HepG2 (cell line): ENCODE measurements at regions of chr11 and their contacts with region 1.

Region 1: GRCh38 chr11:68146704-68147474 is 25.7 kb upstream of the CHKA start:
- DNase-seq: peak; percentile 97
- ATAC-seq: peak; percentile 89
- H3K4me3 ChIP-seq: peak overlapping the region; percentile 43 to 76 (median 44)
- H3K27ac ChIP-seq: peak overlapping the region; percentile 98
- H3K4me1 ChIP-seq: peaks cover 84% of the 10 kb centered on the region
- H3K27me3 ChIP-seq: no peaks in the 10 kb centered on the region; a peak in 1 of 5 replicates
- CTCF ChIP-seq: peak; percentile 35; the same call in 1 of the 2 replicates
- EP300 ChIP-seq: peak in 1 of 2 experiments; percentile 92
- POLR2A ChIP-seq: peak; percentile 94 to 97
- RAD21 ChIP-seq: peak; percentile 73; the same call in 1 of the 2 replicates

Region 2: DNA sequence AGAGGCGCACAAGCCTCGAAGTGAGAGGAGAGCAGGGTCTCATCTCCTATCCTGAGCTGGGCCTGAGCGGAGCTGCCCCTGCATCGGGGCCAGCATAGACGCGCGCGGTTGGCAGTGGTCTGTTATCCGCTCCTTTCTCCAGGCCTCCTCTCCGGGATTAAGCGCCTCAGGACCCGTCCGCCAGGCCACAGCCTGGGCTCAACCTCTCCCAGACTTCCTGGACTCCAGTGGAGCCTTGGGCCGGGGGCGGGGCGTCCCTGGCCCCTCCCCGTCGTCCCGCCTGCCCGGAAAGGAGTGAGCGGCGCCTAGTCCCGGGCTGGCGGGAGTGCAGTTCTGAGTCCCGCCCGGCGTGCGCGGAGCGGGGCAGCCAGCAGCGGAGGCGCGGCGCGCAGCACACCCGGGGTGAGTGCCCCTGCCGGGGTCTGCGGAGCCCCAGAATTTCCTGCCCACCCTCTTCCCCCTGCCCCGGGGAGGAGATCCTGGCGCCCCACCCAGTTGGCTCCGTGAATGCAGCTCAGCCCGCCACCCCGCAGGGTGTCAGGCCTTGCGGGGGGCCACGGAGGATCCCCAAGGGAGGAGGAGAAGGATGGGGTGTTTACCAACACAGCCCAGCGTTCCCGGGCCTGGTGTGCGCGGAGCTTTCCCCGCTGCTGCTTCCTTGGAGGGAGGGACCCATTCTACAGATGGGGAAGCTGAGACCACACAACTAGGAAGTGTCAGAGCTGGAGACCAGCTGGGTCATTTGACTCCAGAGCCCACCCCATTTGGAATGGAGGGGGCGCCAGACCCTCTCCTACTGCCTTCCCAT is 108.0 kb before region 1 on chr11 and contains the start of gene TCIRG1:
- CTCF ChIA-PET with region 1: no interaction called
- POLR2A ChIA-PET with region 1: interaction called, 17 read pairs
- in situ Hi-C with region 1: no loop called
- intact Hi-C with region 1: no loop called
- DNase-seq: peak; percentile 79
- ATAC-seq: peak; percentile 66
- H3K4me3 ChIP-seq: peak within 1 kb of the TSS; percentile 76 to 84 (median 78)
- H3K27ac ChIP-seq: peak within 1 kb of the TSS; percentile 95
- H3K4me1 ChIP-seq: peaks cover 30% of the 10 kb centered on the region
- H3K27me3 ChIP-seq: no peaks in the 10 kb centered on the region
- CTCF ChIP-seq: no peak
- EP300 ChIP-seq: no peak
- POLR2A ChIP-seq: peak in 1 of 2 experiments; percentile 74; a peak in 2 of 4 replicates
- RAD21 ChIP-seq: peak; percentile 14; the same call in 1 of the 2 replicates
- total RNA-seq, gene TCIRG1: 9.9 and 48.0 TPM in 2 replicates

Region 3: DNA sequence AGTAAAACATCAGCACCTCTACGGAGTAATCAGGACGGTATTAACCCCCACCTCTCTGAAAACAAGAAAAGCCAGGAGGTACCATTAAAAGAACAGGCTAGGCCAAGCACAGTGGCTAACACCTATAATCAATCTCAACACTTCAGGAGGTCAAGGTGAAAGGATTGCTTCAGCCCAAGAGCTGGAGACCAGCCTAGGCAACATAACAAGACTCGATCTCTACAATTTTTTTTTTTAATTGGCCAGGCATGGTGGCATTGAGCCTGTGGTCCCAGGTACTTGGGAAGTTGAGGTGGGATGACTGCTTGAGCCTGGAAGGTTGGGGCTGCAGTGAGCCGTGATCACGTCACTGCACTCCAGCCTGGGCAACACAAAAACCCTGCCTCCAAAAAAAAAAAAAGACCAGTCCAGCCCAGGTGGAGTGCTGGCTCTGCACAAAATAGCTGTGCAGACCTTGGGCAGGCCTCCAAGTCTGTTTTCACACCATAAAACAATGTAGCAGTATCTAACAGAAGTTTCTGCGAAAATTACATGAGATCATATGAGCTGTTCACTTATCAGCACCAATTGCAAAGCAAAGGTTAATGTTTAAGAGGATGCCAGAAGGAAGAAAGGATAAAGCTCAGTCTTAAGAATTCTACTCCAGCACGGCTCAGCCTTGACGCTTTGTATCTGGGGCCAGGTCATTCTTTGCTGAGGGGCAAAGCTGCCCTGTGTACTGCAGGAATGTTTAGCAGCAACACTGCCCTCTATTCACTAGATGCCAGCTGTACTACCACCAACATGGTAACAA is 40.5 kb before region 1 on chr11:
- CTCF ChIA-PET with region 1: no interaction called
- POLR2A ChIA-PET with region 1: interaction called, 10 read pairs
- in situ Hi-C with region 1: no loop called
- intact Hi-C with region 1: no loop called
- DNase-seq: peak; percentile 61
- ATAC-seq: peak; percentile 67
- H3K4me3 ChIP-seq: peak overlapping the region in 1 of 3 experiments; percentile 14; a peak in 2 of 6 replicates
- H3K27ac ChIP-seq: peak overlapping the region; percentile 79
- H3K4me1 ChIP-seq: peaks cover 99% of the 10 kb centered on the region
- H3K27me3 ChIP-seq: no peaks in the 10 kb centered on the region
- CTCF ChIP-seq: 0 out of 2 replicates have a peak, but pooled peaks have one; percentile 4
- EP300 ChIP-seq: no peak; a peak in 1 of 4 replicates
- POLR2A ChIP-seq: no peak
- RAD21 ChIP-seq: no peak

Region 4: GRCh38 chr11:68127714-68128681 is 18.9 kb before region 1 on chr11:
- CTCF ChIA-PET with region 1: no interaction called
- POLR2A ChIA-PET with region 1: interaction called, 196 read pairs
- in situ Hi-C with region 1: no loop called
- intact Hi-C with region 1: loop called (anchors 2 kb)
- DNase-seq: peak; percentile 90
- ATAC-seq: peak; percentile 84
- H3K4me3 ChIP-seq: peak overlapping the region; percentile 59 to 78 (median 62)
- H3K27ac ChIP-seq: peak overlapping the region; percentile 99
- H3K4me1 ChIP-seq: peaks cover 67% of the 10 kb centered on the region
- H3K27me3 ChIP-seq: no peaks in the 10 kb centered on the region
- CTCF ChIP-seq: peak; percentile 37; the same call in 1 of the 2 replicates
- EP300 ChIP-seq: peak in 1 of 2 experiments; percentile 74; a peak in 3 of 4 replicates
- POLR2A ChIP-seq: no peak
- RAD21 ChIP-seq: peak; percentile 46

Region 5: DNA sequence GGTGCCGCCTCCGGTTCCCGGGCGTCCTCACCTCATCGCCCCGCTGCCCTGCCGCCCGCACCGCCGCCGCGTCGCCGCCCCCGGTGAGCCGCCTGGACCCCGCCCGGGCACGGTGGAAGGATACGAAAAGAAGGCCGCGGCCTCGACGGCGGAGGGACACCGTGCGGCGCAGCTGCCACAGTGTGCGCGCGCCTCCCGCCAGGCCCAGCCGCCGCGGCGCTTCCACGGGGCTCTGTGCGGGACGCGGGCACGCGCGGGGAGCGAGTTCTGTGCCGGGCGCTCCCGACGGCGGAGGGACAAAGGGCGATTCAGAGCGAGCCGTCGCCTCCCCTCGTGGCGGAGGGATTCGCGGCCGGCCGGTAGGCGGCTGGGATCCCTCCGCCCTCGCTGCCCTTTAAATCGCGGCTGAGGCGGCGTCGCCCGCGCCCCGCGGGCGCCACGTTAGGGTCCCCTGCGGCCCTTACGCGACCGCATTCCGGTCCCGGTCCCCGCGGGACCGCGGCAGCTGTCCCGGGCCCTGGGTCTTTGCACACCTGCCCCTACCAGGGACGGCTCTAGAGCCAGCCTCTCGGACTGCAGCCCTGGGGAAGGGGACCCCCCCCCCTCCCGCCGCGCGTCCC is 66.8 kb after region 1 on chr11:
- CTCF ChIA-PET with region 1: no interaction called
- POLR2A ChIA-PET with region 1: interaction called, 21 read pairs
- in situ Hi-C with region 1: no loop called
- intact Hi-C with region 1: no loop called
- DNase-seq: peak; percentile 76
- ATAC-seq: peak; percentile 16
- H3K4me3 ChIP-seq: peak overlapping the region; percentile 63 to 74 (median 63)
- H3K27ac ChIP-seq: peak overlapping the region; percentile 98
- H3K4me1 ChIP-seq: peaks cover 67% of the 10 kb centered on the region
- H3K27me3 ChIP-seq: no peaks in the 10 kb centered on the region; a peak in 1 of 5 replicates
- CTCF ChIP-seq: peak; percentile 16; the same call in 1 of the 2 replicates
- EP300 ChIP-seq: no peak
- POLR2A ChIP-seq: peak; percentile 97
- RAD21 ChIP-seq: peak; percentile 76